ENCODE measurements at regions of chr6 and their contacts with region 1.

Region 1: DNA sequence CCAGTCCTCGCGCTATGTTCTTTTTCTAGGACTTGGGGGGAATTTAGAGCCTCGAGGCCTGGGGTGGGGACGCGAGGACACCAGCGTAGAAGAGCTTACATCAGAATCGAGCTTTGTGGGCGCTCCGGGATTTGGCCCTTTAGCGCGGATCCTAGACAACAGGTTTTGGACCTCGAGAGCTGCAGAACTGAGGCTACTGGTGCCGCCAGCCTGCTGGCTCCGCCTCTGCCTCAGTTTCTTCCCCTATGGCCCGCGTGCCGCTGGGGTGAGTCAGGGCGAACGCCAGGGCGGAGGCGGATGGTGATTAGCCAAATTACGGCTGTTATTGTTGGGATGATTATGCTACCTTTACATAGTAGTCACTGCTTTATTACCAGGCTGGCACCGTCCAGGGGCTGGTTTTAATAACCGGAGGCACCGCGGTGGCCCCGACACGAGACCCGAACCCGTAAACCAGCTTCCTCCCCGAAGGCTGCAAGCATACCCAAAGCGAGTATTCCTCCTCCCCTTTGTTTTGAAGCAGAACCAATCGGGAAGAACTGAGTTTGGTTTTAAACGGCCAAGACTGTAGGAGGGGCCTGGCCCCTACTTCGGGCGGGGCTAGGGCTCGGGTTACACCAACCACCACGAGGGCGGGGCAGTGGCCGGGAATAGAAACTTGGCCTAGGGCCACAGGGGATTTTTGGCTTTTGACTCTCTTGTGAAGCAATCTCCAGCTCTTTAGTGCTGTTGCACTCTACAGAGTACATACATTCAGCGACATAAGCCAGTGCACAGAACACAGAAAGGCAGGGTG is 639 bp upstream of the GTPBP2 start:
- DNase-seq: peak; percentile 90 to 91
- H3K4me3 ChIP-seq: peak overlapping the region; percentile 59 to 89 (median 68)
- H3K27ac ChIP-seq: peak overlapping the region; percentile 90
- H3K4me1 ChIP-seq: peaks cover 0 to 4% (median 0%) of the 10 kb centered on the region in 4 experiments; a peak in 3 of 7 replicates
- H3K27me3 ChIP-seq: no peaks in the 10 kb centered on the region
- CTCF ChIP-seq: no peak
- EP300 ChIP-seq: no peak
- POLR2A ChIP-seq: peak; percentile 64 to 95
- RAD21 ChIP-seq: no peak

Region 2: GRCh38 chr6:43575772-43576551 is 53.7 kb before region 1 on chr6 and contains the starts of genes POLH and XPO5:
- CTCF ChIA-PET with region 1: no interaction called
- POLR2A ChIA-PET with region 1: interaction called, 16 read pairs
- DNase-seq: peak; percentile 68 to 93
- H3K4me3 ChIP-seq: peak within 1 kb of the TSS; percentile 76 to 96 (median 82)
- H3K27ac ChIP-seq: peak within 1 kb of the TSS; percentile 23; the same call in 1 of the 2 replicates
- H3K4me1 ChIP-seq: peaks cover 0 to 3% (median 0%) of the 10 kb centered on the region in 4 experiments; a peak in 2 of 7 replicates
- H3K27me3 ChIP-seq: no peaks in the 10 kb centered on the region
- CTCF ChIP-seq: no peak
- EP300 ChIP-seq: no peak
- POLR2A ChIP-seq: peak in 1 of 2 experiments; percentile 68; a peak in 2 of 3 replicates
- RAD21 ChIP-seq: no peak
- total RNA-seq, gene POLH: 11.3 and 12.4 TPM in 2 replicates
- total RNA-seq, gene XPO5: 95.7 and 101 TPM in 2 replicates

Region 3: DNA sequence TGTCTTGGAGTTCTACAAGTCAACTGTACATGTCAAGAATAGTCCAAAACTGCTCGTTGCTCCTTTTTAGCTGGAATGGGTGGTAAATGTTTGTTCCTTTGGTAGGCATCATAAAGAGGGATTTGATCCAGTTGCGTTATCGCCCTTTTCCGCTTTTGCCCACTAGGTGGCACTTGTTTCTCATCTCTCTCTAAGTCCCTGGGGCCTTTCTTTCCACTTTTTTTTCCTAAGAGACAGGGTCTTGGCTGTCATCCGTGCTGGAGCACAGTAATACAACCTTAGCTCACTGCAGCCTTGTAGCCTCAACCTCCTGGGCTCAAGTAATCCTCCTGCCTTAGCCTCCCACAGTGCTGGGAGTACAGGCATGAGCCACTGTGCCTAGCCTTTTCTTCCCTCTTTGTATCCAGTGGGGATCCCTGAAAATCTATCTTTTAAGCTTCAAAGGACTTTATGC is 21.4 kb before region 1 on chr6:
- CTCF ChIA-PET with region 1: interaction called, 23 read pairs
- POLR2A ChIA-PET with region 1: interaction called, 17 read pairs
- DNase-seq: peak; percentile 17 to 84
- H3K4me3 ChIP-seq: no peak overlapping the region
- H3K27ac ChIP-seq: no peak overlapping the region
- H3K4me1 ChIP-seq: no peaks in the 10 kb centered on the region
- H3K27me3 ChIP-seq: no peaks in the 10 kb centered on the region
- CTCF ChIP-seq: peak; percentile 14 to 90 (median 72)
- EP300 ChIP-seq: no peak
- POLR2A ChIP-seq: no peak
- RAD21 ChIP-seq: peak; percentile 64 to 72

Region 4: GRCh38 chr6:43613721-43614393 is 15.8 kb before region 1 on chr6:
- CTCF ChIA-PET with region 1: interaction called, 23 read pairs
- POLR2A ChIA-PET with region 1: interaction called, 20 read pairs
- DNase-seq: no peak
- H3K4me3 ChIP-seq: no peak overlapping the region
- H3K27ac ChIP-seq: no peak overlapping the region
- H3K4me1 ChIP-seq: no peaks in the 10 kb centered on the region
- H3K27me3 ChIP-seq: no peaks in the 10 kb centered on the region
- CTCF ChIP-seq: no peak
- EP300 ChIP-seq: no peak
- POLR2A ChIP-seq: no peak
- RAD21 ChIP-seq: no peak

Region 5: GRCh38 chr6:43644931-43645612 is 15.4 kb after region 1 on chr6 and contains the start of gene RSPH9:
- CTCF ChIA-PET with region 1: no interaction called
- POLR2A ChIA-PET with region 1: interaction called, 79 read pairs
- DNase-seq: peak; percentile 92 to 96
- H3K4me3 ChIP-seq: peak within 1 kb of the TSS; percentile 49 to 71 (median 66)
- H3K27ac ChIP-seq: no peak within 1 kb of the TSS
- H3K4me1 ChIP-seq: no peaks in the 10 kb centered on the region; a peak in 1 of 7 replicates
- H3K27me3 ChIP-seq: no peaks in the 10 kb centered on the region
- CTCF ChIP-seq: no peak
- EP300 ChIP-seq: no peak
- POLR2A ChIP-seq: no peak
- RAD21 ChIP-seq: no peak
- total RNA-seq, gene RSPH9: 0.15 TPM in 1 of 2 replicates, not detected in the other

Region 6: DNA sequence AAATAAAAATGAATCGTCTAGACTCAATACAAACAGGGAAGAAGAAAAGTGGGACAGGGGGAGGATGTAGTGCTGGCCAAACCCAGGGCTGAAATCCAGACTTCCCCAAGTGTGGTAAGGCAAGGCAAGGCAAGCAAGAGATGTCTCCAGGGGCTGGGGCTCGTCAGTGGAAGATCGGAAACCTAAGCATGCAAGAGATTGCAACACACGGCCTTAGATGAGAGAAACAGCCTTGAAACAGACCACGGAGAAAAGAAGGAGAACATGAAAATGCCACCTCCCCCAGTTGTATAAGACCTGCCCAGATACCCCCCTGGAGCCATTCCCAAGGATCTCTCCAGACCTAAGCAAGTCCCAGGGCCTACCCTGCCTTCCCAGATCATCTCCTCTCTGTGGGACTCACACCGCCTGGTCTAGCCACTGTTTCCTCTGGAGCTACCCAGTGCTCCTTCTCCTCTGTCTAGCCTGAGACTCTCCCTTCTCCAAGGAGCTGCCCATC is 160.4 kb after region 1 on chr6:
- CTCF ChIA-PET with region 1: no interaction called
- POLR2A ChIA-PET with region 1: no interaction called
- DNase-seq: no peak
- H3K4me3 ChIP-seq: no peak overlapping the region
- H3K27ac ChIP-seq: no peak overlapping the region
- H3K4me1 ChIP-seq: no peaks in the 10 kb centered on the region
- H3K27me3 ChIP-seq: no peaks in the 10 kb centered on the region
- CTCF ChIP-seq: no peak
- EP300 ChIP-seq: no peak
- POLR2A ChIP-seq: no peak
- RAD21 ChIP-seq: no peak

Measured in H1 (cell line).